AG04449 (cell line): ENCODE measurements at regions of chr6 and their contacts with region 1.

Region 1: GRCh38 chr6:55617272-55617671 is 38.3 kb upstream of the HMGCLL1 start:
- DNase-seq: no peak
- H3K4me3 ChIP-seq: no peak overlapping the region
- CTCF ChIP-seq: peak; percentile 69

Region 2: GRCh38 chr6:55601120-55601519 is 16.2 kb before region 1 on chr6:
- CTCF ChIA-PET with region 1: interaction called, 10 read pairs
- POLR2A ChIA-PET with region 1: no interaction called
- DNase-seq: no peak
- H3K4me3 ChIP-seq: no peak overlapping the region
- CTCF ChIP-seq: no peak

Region 3: DNA sequence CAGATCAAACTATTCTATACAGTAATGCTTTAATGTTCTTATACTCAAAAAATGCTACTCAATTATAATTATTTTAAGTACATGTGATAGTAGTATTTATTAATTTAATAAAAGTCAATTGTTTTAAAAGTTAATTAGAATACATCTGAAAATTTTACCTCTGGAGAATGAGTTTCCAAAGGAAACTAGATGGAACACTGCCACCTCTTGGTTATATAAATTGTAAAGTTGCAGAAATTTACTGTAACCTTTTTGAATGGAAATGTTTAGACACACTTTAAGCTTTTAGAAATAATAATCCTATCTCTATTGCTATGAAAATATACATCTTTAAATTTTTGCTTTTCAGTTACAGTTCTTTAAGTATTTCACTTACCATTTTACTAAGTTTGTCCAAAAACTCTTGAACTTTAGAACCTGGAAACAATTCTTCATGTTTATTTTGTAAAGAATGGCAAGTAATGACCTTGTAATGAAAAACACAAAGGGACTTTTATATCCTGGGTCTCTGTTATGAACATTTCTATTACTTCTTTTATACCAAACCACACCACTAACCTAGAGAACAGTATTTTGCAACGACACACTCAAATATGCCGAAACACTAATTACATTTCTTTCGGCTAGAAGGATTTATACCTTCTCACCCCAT is 269.0 kb after region 1 on chr6:
- CTCF ChIA-PET with region 1: interaction called, 32 read pairs
- POLR2A ChIA-PET with region 1: no interaction called
- DNase-seq: no peak
- H3K4me3 ChIP-seq: no peak overlapping the region
- CTCF ChIP-seq: no peak

Region 4: DNA sequence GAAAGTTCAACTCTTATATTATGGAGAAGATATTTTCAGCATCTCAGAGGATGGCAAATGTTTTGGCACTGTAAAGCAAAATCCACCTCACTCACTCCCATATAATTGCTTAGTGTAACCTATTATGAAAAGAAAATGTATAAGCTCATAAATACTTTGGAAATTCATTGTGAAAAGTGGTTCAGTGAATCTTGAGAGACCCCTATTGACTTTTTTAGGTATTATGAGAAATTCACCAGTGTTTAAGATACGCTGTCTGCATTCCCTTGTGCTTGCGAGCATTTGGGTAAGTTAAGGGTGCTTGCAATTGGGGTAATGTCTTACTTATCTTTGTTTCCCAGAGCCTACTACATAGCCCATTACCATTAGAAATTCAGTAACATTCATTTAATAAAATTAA is 324.4 kb after region 1 on chr6:
- CTCF ChIA-PET with region 1: interaction called, 19 read pairs
- POLR2A ChIA-PET with region 1: no interaction called
- DNase-seq: no peak
- H3K4me3 ChIP-seq: no peak overlapping the region
- CTCF ChIP-seq: no peak

Region 5: GRCh38 chr6:55953335-55953734 is 336.1 kb after region 1 on chr6:
- CTCF ChIA-PET with region 1: interaction called, 58 read pairs
- POLR2A ChIA-PET with region 1: no interaction called
- DNase-seq: peak; percentile 7
- H3K4me3 ChIP-seq: no peak overlapping the region
- CTCF ChIP-seq: no peak